Activated CD4-positive, alpha-beta memory T cell treated with anti-CD3 and anti-CD28 coated beads, Interleukin-2, amount 10 ng/mL, durations not matched to agents 7 days and 5 days (primary cell): ENCODE measurements at regions of chr22 and their contacts with region 1.

Region 1: DNA sequence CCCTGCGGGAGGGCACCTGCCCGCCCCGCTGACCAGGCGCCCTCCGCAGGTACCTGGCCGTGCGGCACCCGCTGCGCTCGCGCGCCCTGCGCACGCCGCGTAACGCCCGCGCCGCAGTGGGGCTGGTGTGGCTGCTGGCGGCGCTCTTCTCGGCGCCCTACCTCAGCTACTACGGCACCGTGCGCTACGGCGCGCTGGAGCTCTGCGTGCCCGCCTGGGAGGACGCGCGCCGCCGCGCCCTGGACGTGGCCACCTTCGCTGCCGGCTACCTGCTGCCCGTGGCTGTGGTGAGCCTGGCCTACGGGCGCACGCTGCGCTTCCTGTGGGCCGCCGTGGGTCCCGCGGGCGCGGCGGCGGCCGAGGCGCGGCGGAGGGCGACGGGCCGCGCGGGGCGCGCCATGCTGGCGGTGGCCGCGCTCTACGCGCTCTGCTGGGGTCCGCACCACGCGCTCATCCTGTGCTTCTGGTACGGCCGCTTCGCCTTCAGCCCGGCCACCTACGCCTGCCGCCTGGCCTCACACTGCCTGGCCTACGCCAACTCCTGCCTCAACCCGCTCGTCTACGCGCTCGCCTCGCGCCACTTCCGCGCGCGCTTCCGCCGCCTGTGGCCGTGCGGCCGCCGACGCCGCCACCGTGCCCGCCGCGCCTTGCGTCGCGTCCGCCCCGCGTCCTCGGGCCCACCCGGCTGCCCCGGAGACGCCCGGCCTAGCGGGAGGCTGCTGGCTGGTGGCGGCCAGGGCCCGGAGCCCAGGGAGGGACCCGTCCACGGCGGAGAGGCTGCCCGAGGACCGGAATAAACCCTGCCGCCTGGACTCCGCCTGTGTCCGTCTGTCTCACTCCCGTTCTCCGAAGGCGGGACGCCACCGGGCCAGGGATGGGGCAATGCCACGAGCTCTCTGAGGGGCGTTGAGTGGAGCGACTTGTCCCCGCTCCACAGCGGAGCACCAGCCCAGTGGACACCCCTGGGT is 1.8 kb downstream of the GALR3 start:
- DNase-seq: no peak
- H3K4me3 Mint-ChIP-seq: peak overlapping the region; percentile 72
- H3K27ac Mint-ChIP-seq: no peak overlapping the region
- H3K4me1 Mint-ChIP-seq: peaks cover 8% of the 10 kb centered on the region
- H3K27me3 Mint-ChIP-seq: peaks cover 18% of the 10 kb centered on the region

Region 2: DNA sequence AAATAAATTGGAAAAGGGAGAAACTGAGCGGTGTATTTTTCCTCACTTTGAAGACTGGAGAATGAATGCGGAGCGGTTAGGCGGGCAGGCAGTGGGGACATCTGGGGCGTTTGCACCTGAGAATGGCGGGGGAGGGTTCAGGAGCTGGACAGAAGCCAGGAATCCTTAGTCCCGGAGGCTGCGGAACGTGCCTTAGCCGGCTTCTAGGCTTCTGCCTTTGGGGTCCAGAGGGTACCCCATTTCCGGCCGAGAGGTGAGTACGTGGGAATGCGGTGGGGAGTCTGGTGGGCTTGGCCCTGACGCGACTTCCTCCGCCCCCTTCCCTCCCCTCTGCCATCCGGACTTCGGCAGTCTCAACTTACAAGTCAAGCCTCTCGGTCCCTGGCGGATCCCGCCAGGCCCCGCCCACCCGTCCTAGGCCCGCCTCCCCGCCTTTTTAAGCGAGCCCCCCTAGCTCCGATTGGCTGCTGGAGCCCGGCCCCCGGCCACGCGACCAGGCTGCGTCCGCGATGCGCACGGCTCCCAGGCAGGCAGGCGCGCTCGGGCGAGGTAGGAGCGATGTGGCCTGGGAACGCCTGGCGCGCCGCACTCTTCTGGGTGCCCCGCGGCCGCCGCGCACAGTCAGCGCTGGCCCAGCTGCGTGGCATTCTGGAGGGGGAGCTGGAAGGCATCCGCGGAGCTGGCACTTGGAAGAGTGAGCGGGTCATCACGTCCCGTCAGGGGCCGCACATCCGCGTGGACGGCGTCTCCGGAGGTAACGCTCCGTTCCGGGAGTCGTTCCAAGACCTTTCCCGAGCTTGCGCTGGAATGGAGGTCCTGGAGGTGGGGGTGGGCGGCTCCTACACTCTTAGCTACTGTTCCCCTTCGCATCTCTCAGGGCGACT is 17.3 kb before region 1 on chr22 and contains the start of gene GCAT:
- CTCF ChIA-PET with region 1: interaction called, 49 read pairs
- POLR2A ChIA-PET with region 1: interaction called, 11 read pairs
- DNase-seq: peak; percentile 95
- H3K4me3 Mint-ChIP-seq: peak within 1 kb of the TSS; percentile 78
- H3K27ac Mint-ChIP-seq: no peak within 1 kb of the TSS
- H3K4me1 Mint-ChIP-seq: peaks cover 44% of the 10 kb centered on the region
- H3K27me3 Mint-ChIP-seq: peaks cover 40% of the 10 kb centered on the region
- total RNA-seq, gene GCAT: 13.2 to 14.1 TPM